ENCODE measurements at regions of chr18 and their contacts with region 1.

Region 1: DNA sequence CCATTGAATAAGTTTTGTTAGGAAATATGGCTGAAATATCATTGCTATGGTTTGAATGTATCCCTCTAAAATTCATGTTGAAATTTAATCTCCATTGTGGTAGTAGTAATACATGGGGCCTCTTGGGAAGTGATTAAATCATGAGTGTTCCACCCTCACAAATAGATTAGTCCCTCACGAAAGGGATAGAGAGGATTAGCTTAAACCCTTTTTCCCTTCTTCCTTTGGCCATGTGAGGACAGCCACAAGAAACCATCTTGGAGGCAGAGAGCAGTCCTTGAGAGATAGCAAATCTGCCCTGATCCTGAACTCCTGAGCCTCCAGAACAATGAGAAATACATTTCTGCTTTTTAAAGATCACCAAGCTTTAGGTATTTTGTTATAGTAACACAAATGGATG is 274.2 kb downstream of the CDH19 start:
- DNase-seq: no peak
- ATAC-seq: no peak
- H3K4me3 ChIP-seq: no peak overlapping the region
- H3K27ac ChIP-seq: no peak overlapping the region
- H3K4me1 ChIP-seq: no peaks in the 10 kb centered on the region
- H3K27me3 ChIP-seq: no peaks in the 10 kb centered on the region
- CTCF ChIP-seq: no peak

Region 2: GRCh38 chr18:66271927-66272326 is 57.8 kb before region 1 on chr18:
- CTCF ChIA-PET with region 1: no interaction called
- POLR2A ChIA-PET with region 1: no interaction called
- intact Hi-C with region 1: loop called (anchors 10 kb)
- DNase-seq: no peak
- ATAC-seq: no peak
- H3K4me3 ChIP-seq: no peak overlapping the region
- H3K27ac ChIP-seq: no peak overlapping the region
- H3K4me1 ChIP-seq: no peaks in the 10 kb centered on the region
- H3K27me3 ChIP-seq: no peaks in the 10 kb centered on the region
- CTCF ChIP-seq: no peak